ENCODE measurements at regions of chr21 and their contacts with region 1.

Region 1: GRCh38 chr21:42233067-42233961 is 14.4 kb downstream of the ABCG1 start:
- DNase-seq: peak; percentile 52 to 90 (median 78)
- ATAC-seq: peak; percentile 70
- H3K4me3 ChIP-seq: peak overlapping the region; percentile 59
- H3K4me3 Mint-ChIP-seq: peak overlapping the region; percentile 72 to 86 (median 78)
- H3K27ac ChIP-seq: peak overlapping the region; percentile 92
- H3K27ac Mint-ChIP-seq: peak overlapping the region; percentile 70 to 96 (median 91)
- H3K4me1 ChIP-seq: peaks cover 82 to 86% of the 10 kb centered on the region in 2 donors
- H3K4me1 Mint-ChIP-seq: peaks cover 59 to 100% (median 92%) of the 10 kb centered on the region in 7 donors
- H3K27me3 ChIP-seq: no peaks in the 10 kb centered on the region
- H3K27me3 Mint-ChIP-seq: no peaks in the 10 kb centered on the region

Region 2: GRCh38 chr21:41419911-41420862 is 813.1 kb before region 1 on chr21:
- CTCF ChIA-PET with region 1: no interaction called
- POLR2A ChIA-PET with region 1: no interaction called
- intact Hi-C with region 1: loop called in 1 of 2 experiments (anchors 10 kb)
- DNase-seq: peak in 7 of 9 donors; percentile 18 to 53 (median 33)
- ATAC-seq: peak; percentile 88
- H3K4me3 ChIP-seq: peak overlapping the region; percentile 77
- H3K4me3 Mint-ChIP-seq: peak overlapping the region; percentile 89 to 92 (median 90)
- H3K27ac ChIP-seq: peak overlapping the region; percentile 67
- H3K27ac Mint-ChIP-seq: peak overlapping the region; percentile 76 to 100 (median 94)
- H3K4me1 ChIP-seq: peaks cover 0 to 10% of the 10 kb centered on the region in 2 donors
- H3K4me1 Mint-ChIP-seq: peaks cover 12 to 57% (median 49%) of the 10 kb centered on the region in 7 donors
- H3K27me3 ChIP-seq: no peaks in the 10 kb centered on the region
- H3K27me3 Mint-ChIP-seq: peaks cover 0 to 10% (median 0%) of the 10 kb centered on the region in 5 donors

Region 3: GRCh38 chr21:42164064-42164789 is 69.1 kb before region 1 on chr21:
- CTCF ChIA-PET with region 1: interaction called, 6 read pairs
- POLR2A ChIA-PET with region 1: interaction called, 6 read pairs
- intact Hi-C with region 1: loop called (anchors 2 to 5 kb)
- DNase-seq: peak in 7 of 9 donors; percentile 18 to 50 (median 44)
- ATAC-seq: peak; percentile 80
- H3K4me3 ChIP-seq: no peak overlapping the region
- H3K4me3 Mint-ChIP-seq: no peak overlapping the region
- H3K27ac ChIP-seq: no peak overlapping the region
- H3K27ac Mint-ChIP-seq: peak overlapping the region in 5 of 9 donors; percentile 9 to 77 (median 64)
- H3K4me1 ChIP-seq: peaks cover 7 to 30% of the 10 kb centered on the region in 2 donors
- H3K4me1 Mint-ChIP-seq: peaks cover 27 to 56% (median 45%) of the 10 kb centered on the region in 7 donors
- H3K27me3 ChIP-seq: no peaks in the 10 kb centered on the region
- H3K27me3 Mint-ChIP-seq: peaks cover 0 to 7% (median 0%) of the 10 kb centered on the region in 5 donors

Region 4: DNA sequence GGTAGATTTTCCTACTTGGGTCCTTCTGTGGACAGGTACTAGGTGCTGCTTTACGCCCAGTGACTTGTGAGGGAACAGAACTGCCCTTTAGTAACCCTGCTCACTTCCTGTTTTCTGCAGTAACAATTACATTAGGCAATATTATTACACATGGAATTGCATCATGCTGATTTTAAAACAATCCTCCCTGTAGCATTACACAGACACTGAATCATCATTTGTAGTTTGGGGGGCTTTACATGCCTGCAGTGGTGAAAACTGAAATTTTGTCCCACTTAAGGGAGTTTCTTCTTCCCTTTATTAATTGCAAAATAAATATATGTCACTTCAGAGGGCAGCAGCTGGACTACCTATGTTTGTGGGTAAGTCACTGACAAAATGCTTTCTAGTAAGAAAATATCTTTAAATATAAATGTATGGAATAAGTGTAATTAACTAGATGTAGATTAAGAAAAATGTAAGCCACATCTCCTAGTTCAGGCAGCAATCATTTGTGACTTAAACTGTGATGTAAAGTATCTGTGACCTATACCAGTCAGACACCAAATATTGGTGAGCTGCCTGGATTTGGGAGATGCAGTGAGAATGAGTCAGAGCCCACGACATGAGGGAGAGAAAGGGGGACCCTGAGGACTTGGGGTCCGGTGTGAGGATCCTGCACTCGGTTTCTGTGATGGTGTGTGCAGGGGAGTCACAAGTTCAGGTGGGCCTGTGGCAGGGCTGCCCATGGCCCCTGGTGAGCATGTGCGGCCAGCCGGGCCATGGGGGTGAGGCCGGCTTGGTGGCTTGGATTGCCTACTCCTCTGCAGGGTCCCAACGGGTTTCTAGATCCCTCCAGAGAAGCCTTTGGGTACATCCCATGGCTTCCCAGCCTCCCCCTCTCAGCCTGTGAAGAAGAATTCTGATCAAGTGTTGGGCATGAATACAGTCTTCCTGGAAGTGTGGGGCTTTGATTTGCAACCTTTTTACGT is 33.5 kb before region 1 on chr21:
- CTCF ChIA-PET with region 1: no interaction called
- POLR2A ChIA-PET with region 1: interaction called, 4 read pairs
- intact Hi-C with region 1: loop called in 1 of 2 experiments (anchors 1 kb)
- DNase-seq: peak in 7 of 9 donors; percentile 33 to 64 (median 49)
- ATAC-seq: peak; percentile 86
- H3K4me3 ChIP-seq: no peak overlapping the region
- H3K4me3 Mint-ChIP-seq: peak overlapping the region; percentile 34 to 73 (median 66)
- H3K27ac ChIP-seq: peak overlapping the region; percentile 38
- H3K27ac Mint-ChIP-seq: peak overlapping the region; percentile 13 to 95 (median 87)
- H3K4me1 ChIP-seq: peaks cover 25 to 39% of the 10 kb centered on the region in 2 donors
- H3K4me1 Mint-ChIP-seq: peaks cover 37 to 85% (median 75%) of the 10 kb centered on the region in 7 donors
- H3K27me3 ChIP-seq: no peaks in the 10 kb centered on the region
- H3K27me3 Mint-ChIP-seq: peaks cover 0 to 16% (median 0%) of the 10 kb centered on the region in 5 donors

Region 5: GRCh38 chr21:42467140-42467983 is 234.0 kb after region 1 on chr21:
- CTCF ChIA-PET with region 1: no interaction called
- POLR2A ChIA-PET with region 1: no interaction called
- intact Hi-C with region 1: loop called in 1 of 2 experiments (anchors 5 kb)
- DNase-seq: no peak
- ATAC-seq: no peak
- H3K4me3 ChIP-seq: no peak overlapping the region
- H3K4me3 Mint-ChIP-seq: no peak overlapping the region
- H3K27ac ChIP-seq: no peak overlapping the region
- H3K27ac Mint-ChIP-seq: peak overlapping the region in 3 of 9 donors; percentile 44 to 75 (median 48)
- H3K4me1 ChIP-seq: peaks cover 18 to 31% of the 10 kb centered on the region in 2 donors
- H3K4me1 Mint-ChIP-seq: peaks cover 31 to 45% (median 40%) of the 10 kb centered on the region in 7 donors
- H3K27me3 ChIP-seq: no peaks in the 10 kb centered on the region
- H3K27me3 Mint-ChIP-seq: peaks cover 0 to 14% (median 0%) of the 10 kb centered on the region in 5 donors

Region 6: DNA sequence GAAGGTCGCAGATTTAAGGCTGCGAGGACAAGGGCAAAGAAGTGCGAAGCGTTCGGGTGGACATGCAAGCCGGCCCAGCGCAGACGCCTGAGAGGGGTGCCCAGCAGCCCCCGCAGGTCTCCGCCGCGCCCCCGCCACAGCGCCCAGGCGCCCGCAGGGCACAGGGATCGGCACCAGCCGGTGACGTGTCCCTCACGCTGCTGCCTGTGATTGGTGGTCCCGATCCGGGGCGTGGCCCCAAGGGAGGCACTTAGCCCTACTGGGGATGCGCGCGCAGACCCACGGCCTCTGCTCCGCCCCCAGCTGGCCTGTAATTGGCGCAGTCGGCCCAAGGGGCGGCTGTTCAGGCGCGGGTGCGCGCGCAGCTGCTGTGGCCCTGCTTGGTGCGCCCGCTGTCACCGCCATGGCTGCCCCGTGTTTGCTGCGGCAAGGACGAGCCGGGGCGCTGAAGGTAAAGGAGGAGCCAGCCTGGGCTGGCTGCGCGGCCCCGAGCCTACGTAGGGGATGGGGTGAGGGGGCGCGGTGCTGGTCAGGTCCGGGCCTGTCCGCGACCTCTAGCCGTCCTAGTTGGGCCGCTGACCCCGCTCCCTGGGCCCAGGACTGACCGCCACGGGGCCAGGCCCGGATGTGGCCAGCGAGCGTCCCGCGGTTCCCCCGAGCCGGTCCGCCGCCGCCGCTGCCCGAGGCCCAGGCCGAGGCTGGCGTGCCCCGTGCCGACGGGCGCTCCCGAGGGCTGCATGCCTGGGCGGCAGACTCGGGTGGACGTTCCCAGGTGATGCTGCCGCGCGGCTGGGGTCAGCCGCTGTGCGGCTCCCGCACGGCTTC is 659.8 kb after region 1 on chr21 and contains the start of gene NDUFV3:
- CTCF ChIA-PET with region 1: no interaction called
- POLR2A ChIA-PET with region 1: interaction called, 3 read pairs
- intact Hi-C with region 1: loop called in 1 of 2 experiments (anchors 1 kb)
- DNase-seq: peak; percentile 96 to 100 (median 98)
- ATAC-seq: peak; percentile 96
- H3K4me3 ChIP-seq: peak within 1 kb of the TSS; percentile 94
- H3K4me3 Mint-ChIP-seq: peak within 1 kb of the TSS; percentile 87 to 96 (median 90)
- H3K27ac ChIP-seq: peak within 1 kb of the TSS; percentile 97
- H3K27ac Mint-ChIP-seq: peak within 1 kb of the TSS; percentile 92 to 98 (median 97)
- H3K4me1 ChIP-seq: peaks cover 6 to 8% of the 10 kb centered on the region in 2 donors
- H3K4me1 Mint-ChIP-seq: peaks cover 14 to 25% (median 22%) of the 10 kb centered on the region in 7 donors
- H3K27me3 ChIP-seq: no peaks in the 10 kb centered on the region
- H3K27me3 Mint-ChIP-seq: no peaks in the 10 kb centered on the region
- total RNA-seq, gene NDUFV3: 25.3 to 33.1 (median 30.9) TPM